Left ventricle myocardium inferior (tissue), 1 donor: ENCODE measurements at regions of chr18 and their contacts with region 1.

Region 1: DNA sequence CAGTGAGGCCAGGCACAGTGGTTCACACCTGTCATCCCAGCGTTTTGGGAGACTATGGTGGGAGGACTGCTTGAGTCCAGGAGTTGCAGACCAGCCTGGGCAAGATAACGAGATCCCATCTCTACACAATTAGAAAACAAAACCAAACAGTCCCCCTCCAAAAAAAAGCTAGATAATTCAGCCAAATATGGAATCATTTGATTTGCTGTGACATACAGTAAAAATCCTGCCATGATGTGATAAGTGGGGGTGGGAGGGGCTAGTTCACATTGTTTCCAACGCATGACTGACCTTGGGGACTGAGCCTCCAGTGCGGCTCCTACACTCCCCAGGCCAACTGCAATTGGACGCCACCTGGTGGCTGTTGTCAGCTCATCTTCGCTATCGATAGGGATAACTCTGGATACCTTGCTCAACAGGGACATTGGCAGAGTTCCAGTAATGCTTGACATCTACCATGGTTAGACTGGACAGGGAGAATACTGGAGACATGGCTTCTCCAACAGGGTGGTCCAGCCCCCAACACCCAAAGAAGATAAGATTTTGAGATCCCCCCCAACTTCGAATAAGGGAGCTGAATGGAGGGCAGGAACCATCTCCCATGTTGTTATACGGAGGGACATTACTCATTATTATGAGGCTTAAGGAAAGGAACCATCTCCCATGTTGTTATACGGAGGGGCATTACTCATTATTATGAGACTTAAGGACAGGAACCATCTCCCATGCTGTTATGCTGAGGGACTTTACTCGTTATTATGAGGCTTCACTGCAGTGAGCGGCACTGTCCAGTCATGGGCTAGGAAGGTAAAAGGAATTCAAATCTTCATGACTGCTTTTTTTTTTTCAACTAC is 135.9 kb downstream of the TGIF1 start:
- DNase-seq: peak; percentile 69
- H3K4me3 ChIP-seq: no peak overlapping the region
- H3K27ac ChIP-seq: no peak overlapping the region
- H3K4me1 ChIP-seq: peaks cover 5% of the 10 kb centered on the region
- H3K27me3 ChIP-seq: no peaks in the 10 kb centered on the region
- CTCF ChIP-seq: peak; percentile 76

Region 2: DNA sequence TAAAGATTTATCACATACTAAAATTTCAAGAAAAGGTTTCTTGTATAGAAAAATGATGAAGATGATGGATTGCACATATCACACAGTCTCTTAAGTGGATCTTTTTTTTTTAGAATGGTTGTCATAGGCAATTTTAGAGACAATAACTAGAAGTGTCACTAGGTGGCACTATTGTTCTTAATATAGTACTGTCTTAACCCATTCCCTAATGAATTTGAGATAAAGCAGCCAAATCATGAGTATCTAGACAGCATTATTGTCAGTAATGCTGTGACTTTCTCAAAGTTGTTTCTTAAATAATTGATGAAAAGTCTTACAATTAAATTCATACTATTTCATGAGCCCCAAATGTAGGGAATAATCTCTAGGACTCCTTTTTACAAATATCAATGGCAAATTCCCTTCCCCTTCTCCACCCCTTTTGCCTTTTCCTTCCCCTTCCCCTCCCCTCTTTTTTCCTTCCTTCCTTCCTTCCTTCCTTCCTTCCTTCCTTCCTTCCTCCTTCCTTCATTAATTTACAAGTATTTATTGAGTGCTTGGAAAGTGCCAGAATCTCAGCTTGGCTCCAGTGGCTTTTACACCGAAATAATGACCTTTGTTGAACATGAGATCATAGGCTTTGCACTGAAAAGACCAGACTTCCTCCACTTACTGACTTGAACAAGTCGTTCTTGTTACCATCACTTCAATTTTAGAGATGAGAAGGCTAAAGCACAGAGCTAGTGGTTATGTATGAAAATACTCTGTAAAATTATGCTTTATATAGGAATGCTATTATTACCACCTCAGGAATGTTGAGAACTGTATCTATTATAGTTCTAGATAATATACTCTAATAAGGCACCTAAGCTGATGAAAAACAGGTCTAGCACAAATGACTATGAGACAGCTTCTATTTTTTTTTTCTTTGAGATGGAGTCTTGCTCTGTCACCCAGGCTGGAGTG is 304.2 kb before region 1 on chr18:
- intact Hi-C with region 1: loop called (anchors 5 kb)
- DNase-seq: no peak
- H3K4me3 ChIP-seq: peak overlapping the region; percentile 51
- H3K27ac ChIP-seq: peak overlapping the region; percentile 47
- H3K4me1 ChIP-seq: peaks cover 26% of the 10 kb centered on the region
- H3K27me3 ChIP-seq: no peaks in the 10 kb centered on the region
- CTCF ChIP-seq: peak; percentile 79

Region 3: DNA sequence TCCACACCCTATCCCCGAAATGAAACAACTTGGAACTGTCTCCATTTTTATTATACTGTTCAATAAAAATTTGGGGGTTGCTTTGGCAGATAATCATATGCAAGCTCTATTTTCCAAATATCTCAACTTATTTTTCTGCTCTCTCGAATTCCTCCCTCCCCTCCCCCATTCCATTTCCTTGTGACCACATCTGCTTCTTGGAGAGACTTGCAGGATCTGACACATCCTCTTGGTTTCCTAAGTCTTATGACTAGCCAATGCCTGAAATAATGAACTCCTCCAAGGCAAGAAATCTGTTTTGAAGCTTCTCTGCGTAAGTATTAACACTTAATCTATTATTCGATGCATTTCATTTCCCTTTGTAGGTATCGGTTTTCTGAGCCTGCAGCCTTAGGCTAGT is 119.8 kb before region 1 on chr18:
- intact Hi-C with region 1: loop called (anchors 5 kb)
- DNase-seq: no peak
- H3K4me3 ChIP-seq: no peak overlapping the region
- H3K27ac ChIP-seq: no peak overlapping the region
- H3K4me1 ChIP-seq: peaks cover 14% of the 10 kb centered on the region
- H3K27me3 ChIP-seq: no peaks in the 10 kb centered on the region
- CTCF ChIP-seq: no peak

Region 4: DNA sequence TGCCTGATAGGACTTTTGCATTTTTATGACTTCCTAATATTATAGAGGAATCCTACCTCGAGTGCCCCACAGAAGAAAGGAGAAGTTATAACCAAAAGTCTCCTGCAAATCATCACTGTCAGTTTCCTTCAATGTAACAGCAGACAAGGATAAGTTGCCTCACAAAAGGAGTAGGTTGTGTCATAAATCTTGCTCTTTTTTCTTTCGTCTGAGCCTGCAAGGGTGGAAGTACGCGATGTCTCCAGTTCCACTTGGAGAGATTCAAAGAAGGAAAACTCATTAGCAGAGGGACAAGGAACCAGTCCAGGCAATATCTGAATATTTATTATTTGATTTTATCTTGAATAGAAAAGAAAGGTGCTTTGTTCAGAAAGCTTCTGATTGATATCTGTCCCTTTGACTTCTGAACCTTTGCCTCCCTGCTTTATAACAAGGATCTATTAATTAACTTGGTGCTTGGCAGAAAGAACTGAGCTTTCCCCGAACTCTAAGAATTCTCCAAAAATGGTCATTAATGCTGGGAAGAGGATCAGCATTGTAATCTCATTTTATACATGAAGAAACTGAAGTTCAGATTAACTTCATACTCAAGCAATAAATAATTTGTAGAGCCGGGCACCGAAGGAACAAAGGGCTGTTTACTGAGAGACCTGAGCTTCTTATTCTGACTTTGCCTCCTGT is 136.6 kb after region 1 on chr18:
- intact Hi-C with region 1: no loop called
- DNase-seq: no peak
- H3K4me3 ChIP-seq: no peak overlapping the region
- H3K27ac ChIP-seq: no peak overlapping the region
- H3K4me1 ChIP-seq: peaks cover 6% of the 10 kb centered on the region
- H3K27me3 ChIP-seq: peaks cover 15% of the 10 kb centered on the region
- CTCF ChIP-seq: no peak

Region 5: DNA sequence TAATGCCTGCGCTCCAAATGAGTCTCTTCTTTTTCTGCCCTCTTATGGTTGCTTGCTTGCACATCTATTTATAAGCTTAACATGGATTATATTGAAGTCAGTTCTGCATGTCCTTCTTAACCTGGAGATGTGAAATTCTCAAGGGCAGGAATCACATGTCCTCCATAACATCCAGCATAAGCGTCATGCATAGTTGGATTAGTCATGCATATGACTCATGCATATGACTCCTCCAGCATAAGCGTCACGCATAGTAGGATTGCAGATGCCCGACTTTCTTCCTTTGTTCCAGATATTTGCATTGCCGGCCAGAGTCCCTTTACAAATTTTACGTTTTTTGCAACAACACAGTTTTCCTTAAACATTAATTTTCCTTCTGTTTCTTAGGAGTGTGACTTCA is 172.6 kb after region 1 on chr18:
- intact Hi-C with region 1: no loop called
- DNase-seq: no peak
- H3K4me3 ChIP-seq: no peak overlapping the region
- H3K27ac ChIP-seq: no peak overlapping the region
- H3K4me1 ChIP-seq: peaks cover 10% of the 10 kb centered on the region
- H3K27me3 ChIP-seq: no peaks in the 10 kb centered on the region
- CTCF ChIP-seq: no peak